ENCODE measurements at regions of chr10 and their contacts with region 1.

Region 1: DNA sequence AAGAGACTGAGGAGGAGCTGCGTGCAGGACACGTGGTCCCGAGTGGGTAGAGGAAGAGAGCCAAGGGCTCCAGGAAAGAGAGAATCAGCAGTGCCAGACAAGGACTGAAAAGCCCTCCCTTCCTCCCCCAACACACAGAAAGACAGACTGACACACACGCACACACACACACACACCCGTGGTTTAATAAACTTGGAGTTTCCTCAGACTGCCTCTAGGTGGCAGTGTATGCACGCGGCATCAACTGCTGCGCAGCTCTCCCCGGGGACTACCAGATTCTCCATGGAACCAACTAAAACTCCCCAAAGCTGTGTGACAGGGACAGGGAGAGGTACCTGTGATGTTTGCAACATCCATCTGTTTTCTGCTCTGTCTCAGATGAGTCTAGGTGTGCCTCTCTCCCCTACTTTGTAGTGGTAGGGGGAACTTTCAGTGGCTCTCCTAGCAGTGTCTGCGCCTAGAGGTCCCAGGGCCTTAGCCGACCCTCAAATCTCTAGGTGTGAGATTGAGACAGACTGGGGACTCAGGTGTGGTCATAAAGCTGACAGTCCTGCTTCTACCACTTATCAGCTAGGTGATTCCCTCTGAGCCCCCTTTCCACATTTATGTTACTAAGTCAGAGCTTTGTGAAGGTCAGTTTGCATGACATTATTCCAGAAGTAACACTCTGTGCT is 9.3 kb upstream of the TSPAN14 start:
- DNase-seq: peak in 4 of 5 donors; percentile 73 to 83 (median 78)
- H3K4me3 ChIP-seq: no peak overlapping the region
- H3K4me3 Mint-ChIP-seq: peak overlapping the region in 2 of 8 donors; percentile 21 to 32
- H3K27ac ChIP-seq: no peak overlapping the region
- H3K27ac Mint-ChIP-seq: peak overlapping the region; percentile 47 to 88 (median 79)
- H3K4me1 ChIP-seq: peaks cover 32% of the 10 kb centered on the region
- H3K4me1 Mint-ChIP-seq: peaks cover 26 to 60% (median 46%) of the 10 kb centered on the region in 4 donors
- H3K27me3 ChIP-seq: no peaks in the 10 kb centered on the region
- H3K27me3 Mint-ChIP-seq: no peaks in the 10 kb centered on the region

Region 2: DNA sequence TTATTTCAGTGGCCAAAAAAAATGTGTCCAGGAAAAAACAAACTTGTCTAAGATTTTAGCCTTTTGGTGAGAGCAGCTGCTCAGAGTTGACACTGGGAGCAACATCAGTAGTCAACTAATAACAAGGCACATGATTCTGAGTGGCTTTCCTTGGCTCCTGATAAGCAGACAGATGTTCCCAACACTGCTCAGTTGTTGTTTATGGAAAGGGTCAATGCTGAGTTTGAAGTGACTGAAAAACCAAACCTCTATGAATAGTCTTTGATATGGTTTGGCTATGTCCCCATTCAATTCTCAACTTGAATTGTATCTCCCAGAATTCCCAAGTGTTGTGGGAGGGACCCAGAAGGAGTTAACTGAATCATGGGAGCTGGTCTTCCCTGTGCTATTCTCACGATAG is 100.5 kb before region 1 on chr10:
- CTCF ChIA-PET with region 1: no interaction called
- POLR2A ChIA-PET with region 1: no interaction called
- intact Hi-C with region 1: no loop called
- DNase-seq: no peak
- H3K4me3 ChIP-seq: no peak overlapping the region
- H3K4me3 Mint-ChIP-seq: no peak overlapping the region
- H3K27ac ChIP-seq: no peak overlapping the region
- H3K27ac Mint-ChIP-seq: no peak overlapping the region
- H3K4me1 ChIP-seq: no peaks in the 10 kb centered on the region
- H3K4me1 Mint-ChIP-seq: no peaks in the 10 kb centered on the region
- H3K27me3 ChIP-seq: no peaks in the 10 kb centered on the region
- H3K27me3 Mint-ChIP-seq: no peaks in the 10 kb centered on the region

Region 3: GRCh38 chr10:80421707-80422536 is 22.9 kb before region 1 on chr10:
- CTCF ChIA-PET with region 1: interaction called, 13 read pairs
- POLR2A ChIA-PET with region 1: no interaction called
- intact Hi-C with region 1: no loop called
- DNase-seq: no peak
- H3K4me3 ChIP-seq: no peak overlapping the region
- H3K4me3 Mint-ChIP-seq: no peak overlapping the region
- H3K27ac ChIP-seq: no peak overlapping the region
- H3K27ac Mint-ChIP-seq: no peak overlapping the region
- H3K4me1 ChIP-seq: no peaks in the 10 kb centered on the region
- H3K4me1 Mint-ChIP-seq: no peaks in the 10 kb centered on the region
- H3K27me3 ChIP-seq: no peaks in the 10 kb centered on the region
- H3K27me3 Mint-ChIP-seq: no peaks in the 10 kb centered on the region

Region 4: GRCh38 chr10:80464557-80465450 is 20.0 kb after region 1 on chr10:
- CTCF ChIA-PET with region 1: interaction called, 237 read pairs
- POLR2A ChIA-PET with region 1: interaction called, 598 read pairs
- intact Hi-C with region 1: loop called (anchors 1 kb)
- DNase-seq: no peak
- H3K4me3 ChIP-seq: peak overlapping the region; percentile 48 to 58
- H3K4me3 Mint-ChIP-seq: peak overlapping the region; percentile 83 to 100 (median 96)
- H3K27ac ChIP-seq: peak overlapping the region; percentile 83
- H3K27ac Mint-ChIP-seq: peak overlapping the region; percentile 93 to 100 (median 96)
- H3K4me1 ChIP-seq: peaks cover 100% of the 10 kb centered on the region
- H3K4me1 Mint-ChIP-seq: peaks cover 79 to 100% (median 93%) of the 10 kb centered on the region in 4 donors
- H3K27me3 ChIP-seq: no peaks in the 10 kb centered on the region
- H3K27me3 Mint-ChIP-seq: no peaks in the 10 kb centered on the region

Region 5: GRCh38 chr10:80498833-80499741 is 54.3 kb after region 1 on chr10:
- CTCF ChIA-PET with region 1: interaction called, 814 read pairs
- POLR2A ChIA-PET with region 1: interaction called, 713 read pairs
- intact Hi-C with region 1: no loop called
- DNase-seq: peak in 1 of 5 donors; percentile 74
- H3K4me3 ChIP-seq: peak overlapping the region; percentile 1 to 22
- H3K4me3 Mint-ChIP-seq: peak overlapping the region; percentile 48 to 92 (median 81)
- H3K27ac ChIP-seq: peak overlapping the region; percentile 62
- H3K27ac Mint-ChIP-seq: peak overlapping the region; percentile 83 to 97 (median 95)
- H3K4me1 ChIP-seq: peaks cover 100% of the 10 kb centered on the region
- H3K4me1 Mint-ChIP-seq: peaks cover 90 to 100% (median 95%) of the 10 kb centered on the region in 4 donors
- H3K27me3 ChIP-seq: no peaks in the 10 kb centered on the region
- H3K27me3 Mint-ChIP-seq: no peaks in the 10 kb centered on the region

Region 6: DNA sequence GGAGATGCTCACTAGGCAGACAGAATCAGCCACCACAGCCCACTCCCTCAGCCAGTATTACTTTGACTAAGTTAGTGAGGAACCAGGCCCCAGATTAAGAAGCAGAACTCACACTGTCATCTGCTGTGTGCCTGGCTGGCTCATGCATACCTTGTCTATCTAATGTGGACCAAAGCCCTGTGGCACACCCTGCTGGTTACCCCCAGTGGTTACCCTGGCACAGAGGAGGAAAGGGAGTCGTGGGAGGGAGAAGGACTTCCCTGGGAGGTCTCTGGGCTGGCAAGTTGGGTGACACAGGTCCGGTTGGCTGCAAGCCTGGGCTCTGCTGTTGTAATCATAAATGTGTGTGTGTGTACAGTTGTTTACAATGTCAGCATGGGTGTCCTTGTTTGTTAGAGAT is 85.5 kb after region 1 on chr10:
- CTCF ChIA-PET with region 1: interaction called, 17 read pairs
- POLR2A ChIA-PET with region 1: interaction called, 10 read pairs
- intact Hi-C with region 1: loop called (anchors 1 kb)
- DNase-seq: peak in 3 of 5 donors; percentile 22 to 58 (median 36)
- H3K4me3 ChIP-seq: no peak overlapping the region
- H3K4me3 Mint-ChIP-seq: peak overlapping the region in 7 of 8 donors; percentile 34 to 86 (median 75)
- H3K27ac ChIP-seq: peak overlapping the region; percentile 19
- H3K27ac Mint-ChIP-seq: peak overlapping the region; percentile 65 to 96 (median 87)
- H3K4me1 ChIP-seq: peaks cover 71% of the 10 kb centered on the region
- H3K4me1 Mint-ChIP-seq: peaks cover 44 to 79% (median 67%) of the 10 kb centered on the region in 4 donors
- H3K27me3 ChIP-seq: no peaks in the 10 kb centered on the region
- H3K27me3 Mint-ChIP-seq: no peaks in the 10 kb centered on the region

Region 7: GRCh38 chr10:80699602-80700039 is 254.8 kb after region 1 on chr10:
- CTCF ChIA-PET with region 1: interaction called, 4 read pairs
- POLR2A ChIA-PET with region 1: no interaction called
- intact Hi-C with region 1: loop called (anchors 10 kb)
- DNase-seq: peak; percentile 38 to 54 (median 41)
- H3K4me3 ChIP-seq: no peak overlapping the region
- H3K4me3 Mint-ChIP-seq: no peak overlapping the region
- H3K27ac ChIP-seq: no peak overlapping the region
- H3K27ac Mint-ChIP-seq: no peak overlapping the region
- H3K4me1 ChIP-seq: no peaks in the 10 kb centered on the region
- H3K4me1 Mint-ChIP-seq: peaks cover 0 to 5% (median 0%) of the 10 kb centered on the region in 4 donors
- H3K27me3 ChIP-seq: no peaks in the 10 kb centered on the region
- H3K27me3 Mint-ChIP-seq: peaks cover 2 to 3% of the 10 kb centered on the region in 2 donors

Measured in CD4-positive, alpha-beta memory T cell (primary cell).